CD4-positive, alpha-beta memory T cell (primary cell): ENCODE measurements at regions of chr11 and their contacts with region 1.

Region 1: GRCh38 chr11:60345489-60345888 is 18.4 kb downstream of the MS4A6E start:
- DNase-seq: no peak
- H3K4me3 ChIP-seq: no peak overlapping the region
- H3K4me3 Mint-ChIP-seq: no peak overlapping the region
- H3K27ac ChIP-seq: no peak overlapping the region
- H3K27ac Mint-ChIP-seq: no peak overlapping the region
- H3K4me1 ChIP-seq: no peaks in the 10 kb centered on the region
- H3K4me1 Mint-ChIP-seq: no peaks in the 10 kb centered on the region
- H3K27me3 ChIP-seq: no peaks in the 10 kb centered on the region
- H3K27me3 Mint-ChIP-seq: peaks cover 14 to 17% of the 10 kb centered on the region in 2 donors

Region 2: DNA sequence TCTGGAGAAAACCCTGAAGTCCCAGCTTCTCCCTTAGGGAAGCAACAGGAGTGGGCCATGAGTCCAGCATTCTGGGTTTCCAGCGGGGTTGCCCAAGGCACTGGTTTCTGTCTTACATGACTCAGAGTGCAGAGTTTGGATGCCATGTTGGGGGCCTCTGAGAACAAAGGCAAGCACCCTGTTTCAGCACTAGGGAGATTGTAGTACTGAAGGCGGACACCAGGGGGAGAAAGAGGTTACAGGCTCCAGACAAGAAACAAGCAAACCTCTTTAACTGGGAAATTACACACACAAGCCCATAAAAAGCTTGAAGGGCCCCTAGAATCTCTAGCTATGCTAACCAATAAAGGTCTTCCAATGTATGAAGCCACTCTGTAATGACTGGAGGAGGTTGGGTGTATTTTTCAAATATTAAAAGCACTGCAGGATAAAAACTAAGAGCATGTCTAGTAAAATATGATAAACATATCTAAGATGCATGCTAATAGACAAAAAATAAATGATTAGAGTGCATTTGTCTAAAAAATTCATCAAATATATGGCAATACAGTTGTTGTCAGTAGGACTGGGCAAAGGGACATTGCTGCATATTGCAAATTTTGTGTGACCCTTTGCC is 11.4 kb before region 1 on chr11:
- CTCF ChIA-PET with region 1: interaction called, 10 read pairs
- POLR2A ChIA-PET with region 1: no interaction called
- intact Hi-C with region 1: no loop called
- DNase-seq: peak; percentile 20 to 54 (median 40)
- H3K4me3 ChIP-seq: no peak overlapping the region
- H3K4me3 Mint-ChIP-seq: no peak overlapping the region
- H3K27ac ChIP-seq: no peak overlapping the region
- H3K27ac Mint-ChIP-seq: no peak overlapping the region
- H3K4me1 ChIP-seq: no peaks in the 10 kb centered on the region
- H3K4me1 Mint-ChIP-seq: no peaks in the 10 kb centered on the region
- H3K27me3 ChIP-seq: no peaks in the 10 kb centered on the region
- H3K27me3 Mint-ChIP-seq: peaks cover 18 to 25% of the 10 kb centered on the region in 2 donors